GM10248 (cell line): ENCODE measurements at regions of chr1 and their contacts with region 1.

Region 1: DNA sequence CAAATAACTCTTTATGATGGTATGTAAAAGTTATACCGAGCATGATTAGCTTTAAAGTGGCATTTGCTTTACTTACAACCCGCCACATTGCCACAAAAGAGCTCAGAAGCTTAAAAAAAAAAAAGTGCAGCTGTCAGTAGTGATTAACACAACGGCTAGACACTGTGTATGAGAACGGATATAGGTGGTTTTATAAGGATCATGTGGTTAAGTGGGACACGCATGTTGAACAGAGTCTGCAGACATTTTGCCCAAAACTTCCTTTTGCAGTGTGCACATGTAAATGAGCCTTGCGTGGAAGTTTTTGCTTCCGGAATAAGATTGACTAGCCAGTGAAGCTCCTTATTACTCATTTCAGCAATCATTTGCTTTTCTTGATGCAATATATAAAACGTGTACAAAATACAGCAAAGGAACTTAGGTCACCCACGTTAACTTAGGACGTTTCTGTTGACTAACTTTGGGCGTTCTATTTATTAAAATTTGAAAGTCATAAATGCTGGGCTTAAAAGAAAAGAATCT is 58.7 kb upstream of the RGS1 start:
- DNase-seq: peak; percentile 52
- CTCF ChIP-seq: no peak

Region 2: GRCh38 chr1:192506741-192507155 is 10.1 kb before region 1 on chr1:
- CTCF ChIA-PET with region 1: interaction called, 12 read pairs
- POLR2A ChIA-PET with region 1: no interaction called
- DNase-seq: peak; percentile 61
- CTCF ChIP-seq: peak; percentile 73

Region 3: DNA sequence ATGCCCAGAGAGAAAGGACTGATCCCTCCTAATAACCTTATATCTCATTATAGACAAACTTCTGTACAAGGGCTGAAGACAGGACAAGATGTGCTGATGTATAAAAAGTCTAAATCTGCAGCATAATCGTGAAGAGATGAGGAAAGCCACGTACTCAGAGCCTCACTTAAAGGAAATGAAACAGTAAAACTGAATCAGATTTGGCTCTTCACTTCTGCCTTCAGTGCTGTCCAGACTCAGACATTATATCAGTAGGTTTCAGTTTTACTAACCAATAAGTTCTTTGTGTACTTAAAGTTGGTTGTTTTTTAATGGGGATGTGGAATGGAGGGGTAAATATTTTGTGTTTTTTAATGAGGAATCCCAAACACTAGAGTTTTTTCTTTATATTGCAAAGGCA is 13.4 kb after region 1 on chr1:
- CTCF ChIA-PET with region 1: interaction called, 12 read pairs
- POLR2A ChIA-PET with region 1: no interaction called
- DNase-seq: peak; percentile 40
- CTCF ChIP-seq: no peak

Region 4: GRCh38 chr1:192539297-192540092 is 22.7 kb after region 1 on chr1:
- CTCF ChIA-PET with region 1: interaction called, 33 read pairs
- POLR2A ChIA-PET with region 1: interaction called, 4 read pairs
- DNase-seq: no peak
- CTCF ChIP-seq: no peak

Region 5: GRCh38 chr1:192545896-192546521 is 29.2 kb after region 1 on chr1:
- CTCF ChIA-PET with region 1: interaction called, 33 read pairs
- POLR2A ChIA-PET with region 1: no interaction called
- DNase-seq: peak; percentile 24
- CTCF ChIP-seq: no peak